Activated B cell treated with CpG ODN at 0.5 μM for 24 hours (primary cell): ENCODE measurements at regions of chr4 and their contacts with region 1.

Region 1: DNA sequence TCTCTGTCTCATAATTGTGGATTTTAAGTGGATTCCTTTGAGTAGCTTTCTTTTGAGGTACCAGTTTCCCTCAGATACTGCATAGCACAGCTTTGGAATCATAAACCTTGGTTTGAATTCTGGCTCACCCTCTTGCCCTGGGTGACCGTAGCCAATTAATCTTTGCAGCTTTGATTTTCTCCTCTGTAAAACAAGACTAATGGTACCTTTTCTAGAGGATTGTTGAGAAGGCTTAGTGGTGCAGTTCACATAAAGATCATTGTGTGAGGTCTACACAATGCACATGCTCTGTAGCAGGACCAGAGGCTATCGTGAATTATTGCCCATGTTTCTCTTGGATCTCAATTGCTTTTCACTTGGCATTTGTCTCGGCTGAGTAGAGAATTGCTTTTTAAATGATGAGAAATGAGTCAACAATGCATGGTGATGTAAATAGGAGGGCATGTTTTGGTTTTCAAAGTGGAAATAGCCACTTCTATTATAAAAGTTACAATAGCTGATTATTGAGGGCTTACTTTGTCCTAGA is 47.9 kb downstream of the TMEM131L start:
- DNase-seq: no peak
- ATAC-seq: no peak
- H3K4me3 Mint-ChIP-seq: peak overlapping the region; percentile 4
- H3K27ac Mint-ChIP-seq: peak overlapping the region; percentile 57
- H3K4me1 Mint-ChIP-seq: peaks cover 87% of the 10 kb centered on the region
- H3K27me3 Mint-ChIP-seq: no peaks in the 10 kb centered on the region
- CTCF ChIP-seq: no peak

Region 2: GRCh38 chr4:153497988-153498967 is 15.8 kb before region 1 on chr4:
- CTCF ChIA-PET with region 1: no interaction called
- POLR2A ChIA-PET with region 1: interaction called, 7 read pairs
- intact Hi-C with region 1: loop called (anchors 1 kb)
- DNase-seq: no peak
- ATAC-seq: peak; percentile 79
- H3K4me3 Mint-ChIP-seq: peak overlapping the region; percentile 73
- H3K27ac Mint-ChIP-seq: peak overlapping the region; percentile 80
- H3K4me1 Mint-ChIP-seq: peaks cover 94% of the 10 kb centered on the region
- H3K27me3 Mint-ChIP-seq: no peaks in the 10 kb centered on the region
- CTCF ChIP-seq: no peak

Region 3: DNA sequence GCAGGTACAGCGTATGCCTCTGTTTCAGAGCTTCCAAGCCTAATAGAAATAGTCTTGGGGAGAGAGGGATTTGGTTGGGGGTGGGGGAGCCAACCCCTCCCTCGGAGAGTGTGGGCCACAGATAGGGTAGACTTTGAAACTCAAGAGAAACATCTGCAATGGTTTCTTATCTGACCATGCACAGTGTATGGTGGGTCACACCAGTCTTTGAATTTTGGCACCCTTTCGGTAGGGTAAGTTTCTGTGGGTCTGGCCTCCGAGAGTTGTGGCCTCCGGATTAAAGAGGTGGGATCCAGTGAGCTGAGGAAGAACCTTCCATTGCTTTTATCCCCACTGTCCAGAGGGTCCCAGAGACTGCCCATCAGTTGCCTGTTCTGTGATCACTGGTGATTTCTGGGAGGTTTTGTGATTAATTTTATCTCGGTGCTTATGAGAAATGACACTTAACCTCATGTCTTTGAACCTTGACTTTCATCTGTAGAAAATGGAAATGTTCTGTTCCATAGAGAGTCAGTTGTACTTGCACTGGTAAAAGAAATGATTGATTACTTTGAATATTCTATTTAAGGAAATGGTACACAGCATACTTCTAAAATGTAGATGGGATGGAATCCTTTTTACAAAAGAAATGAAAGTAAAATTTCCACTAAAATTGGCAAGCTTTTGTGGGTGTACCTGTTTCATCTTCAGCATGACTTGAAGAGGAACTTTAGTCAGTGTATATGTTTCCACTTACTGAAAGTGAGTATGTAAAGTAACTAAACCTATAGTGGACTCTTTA is 14.8 kb after region 1 on chr4:
- CTCF ChIA-PET with region 1: no interaction called
- POLR2A ChIA-PET with region 1: interaction called, 3 read pairs
- intact Hi-C with region 1: loop called (anchors 2 kb)
- DNase-seq: no peak
- ATAC-seq: no peak
- H3K4me3 Mint-ChIP-seq: peak overlapping the region; percentile 56
- H3K27ac Mint-ChIP-seq: peak overlapping the region; percentile 82
- H3K4me1 Mint-ChIP-seq: peaks cover 93% of the 10 kb centered on the region
- H3K27me3 Mint-ChIP-seq: no peaks in the 10 kb centered on the region
- CTCF ChIP-seq: no peak

Region 4: DNA sequence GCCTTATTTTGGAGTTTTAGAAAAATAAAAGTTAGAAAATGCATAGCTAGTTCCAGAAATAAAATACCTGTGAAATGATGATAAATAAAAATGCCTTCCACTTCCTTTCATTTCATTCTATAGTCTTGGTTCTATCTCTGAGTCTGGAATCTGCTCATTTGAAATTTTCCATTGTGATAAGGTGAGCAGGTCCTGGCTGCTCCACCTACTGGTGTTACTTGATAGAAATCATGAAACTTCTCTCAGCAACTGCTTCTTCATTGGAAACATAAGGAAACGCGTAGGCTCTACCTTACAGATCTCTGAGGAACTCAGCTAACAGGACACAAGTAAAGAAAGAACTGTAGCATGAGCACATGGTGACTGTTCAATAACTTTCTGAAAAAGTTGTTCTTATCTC is 835.8 kb after region 1 on chr4:
- CTCF ChIA-PET with region 1: no interaction called
- POLR2A ChIA-PET with region 1: no interaction called
- intact Hi-C with region 1: no loop called
- DNase-seq: no peak
- ATAC-seq: no peak
- H3K4me3 Mint-ChIP-seq: no peak overlapping the region
- H3K27ac Mint-ChIP-seq: no peak overlapping the region
- H3K4me1 Mint-ChIP-seq: no peaks in the 10 kb centered on the region
- H3K27me3 Mint-ChIP-seq: no peaks in the 10 kb centered on the region
- CTCF ChIP-seq: no peak